ENCODE measurements at regions of chr20 and their contacts with region 1.

Region 1: DNA sequence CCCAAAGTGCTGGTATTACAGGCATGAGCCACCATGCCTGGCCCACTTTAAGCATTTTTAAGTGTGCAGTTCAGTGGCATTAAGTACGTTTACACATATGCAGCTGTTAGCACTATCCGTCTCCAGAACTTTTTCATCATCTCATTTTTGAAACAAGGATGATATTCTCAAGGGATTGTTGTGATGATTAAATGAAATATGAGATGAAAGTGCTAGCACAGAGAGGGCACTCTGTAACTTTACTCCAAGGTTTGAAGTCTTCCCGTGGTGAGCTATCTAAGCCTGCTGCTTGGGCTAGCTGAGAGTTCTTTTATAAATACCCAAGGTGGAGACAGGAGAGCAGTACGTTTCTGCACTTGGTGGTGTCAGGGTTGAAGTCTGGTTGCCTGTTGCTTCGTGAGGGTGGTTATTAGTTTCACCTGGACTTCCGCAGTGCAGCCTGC is 6.6 kb downstream of the TM9SF4 start:
- DNase-seq: no peak
- H3K4me3 Mint-ChIP-seq: no peak overlapping the region
- H3K27ac Mint-ChIP-seq: no peak overlapping the region
- H3K4me1 Mint-ChIP-seq: peaks cover 54% of the 10 kb centered on the region
- H3K27me3 Mint-ChIP-seq: no peaks in the 10 kb centered on the region

Region 2: GRCh38 chr20:32098786-32099185 is 17.3 kb before region 1 on chr20:
- CTCF ChIA-PET with region 1: no interaction called
- POLR2A ChIA-PET with region 1: no interaction called
- intact Hi-C with region 1: loop called (anchors 1 kb)
- DNase-seq: no peak
- H3K4me3 Mint-ChIP-seq: no peak overlapping the region
- H3K27ac Mint-ChIP-seq: no peak overlapping the region
- H3K4me1 Mint-ChIP-seq: no peaks in the 10 kb centered on the region
- H3K27me3 Mint-ChIP-seq: peaks cover 22% of the 10 kb centered on the region

Measured in activated CD4-positive, alpha-beta memory T cell treated with anti-CD3 and anti-CD28 coated beads for 36 hours (primary cell).